ENCODE measurements at regions of chr7 and their contacts with region 1.

Region 1: DNA sequence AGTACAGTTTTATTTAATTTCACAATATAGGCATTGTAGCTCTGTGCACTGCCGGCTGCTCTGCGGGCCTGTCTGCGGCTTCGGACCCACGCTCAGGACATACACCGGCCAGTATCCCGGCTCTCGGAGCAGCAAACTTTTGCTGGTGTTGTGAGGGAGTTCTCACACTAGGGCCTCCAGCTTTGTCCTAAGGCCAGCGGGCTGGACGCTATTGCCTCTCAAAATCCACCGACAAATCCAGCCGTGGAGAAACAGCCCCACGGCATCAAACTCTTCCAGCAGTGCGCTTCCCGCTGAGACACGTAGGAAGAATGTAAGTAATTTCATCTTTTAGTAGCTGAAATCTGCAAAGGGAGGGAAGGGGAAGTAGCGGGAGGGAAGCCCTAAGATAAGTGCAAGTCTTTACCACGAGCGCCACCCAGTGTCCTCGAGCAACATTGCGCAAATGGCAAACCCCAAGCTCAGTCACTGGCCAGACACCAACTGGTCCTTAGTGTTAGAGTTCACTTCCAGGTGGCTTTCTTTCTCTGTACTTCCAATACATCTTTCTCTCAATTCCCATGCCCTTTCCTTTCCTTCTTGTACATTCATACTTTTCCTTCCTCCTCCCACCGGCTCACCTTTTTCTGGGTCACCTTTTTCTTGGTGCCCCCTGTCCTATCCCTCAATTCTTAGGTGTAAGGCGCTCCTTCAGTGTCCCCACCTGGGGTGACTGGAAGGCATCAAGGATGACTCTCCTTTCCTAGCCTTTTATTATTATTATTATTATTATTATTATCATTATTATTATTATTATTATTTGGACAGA is 3.0 kb upstream of the DLX5 start:
- DNase-seq: peak; percentile 81 to 86 (median 82)
- ATAC-seq: peak; percentile 98
- H3K4me3 ChIP-seq: no peak overlapping the region
- H3K27ac ChIP-seq: no peak overlapping the region
- H3K4me1 ChIP-seq: peaks cover 0 to 9% of the 10 kb centered on the region in 2 experiments; a peak in 1 of 5 replicates
- H3K27me3 ChIP-seq: peaks cover 47 to 55% of the 10 kb centered on the region in 2 experiments
- CTCF ChIP-seq: peak; percentile 85 to 97 (median 96)
- EP300 ChIP-seq: no peak
- POLR2A ChIP-seq: no peak
- RAD21 ChIP-seq: peak; percentile 93 to 94

Region 2: DNA sequence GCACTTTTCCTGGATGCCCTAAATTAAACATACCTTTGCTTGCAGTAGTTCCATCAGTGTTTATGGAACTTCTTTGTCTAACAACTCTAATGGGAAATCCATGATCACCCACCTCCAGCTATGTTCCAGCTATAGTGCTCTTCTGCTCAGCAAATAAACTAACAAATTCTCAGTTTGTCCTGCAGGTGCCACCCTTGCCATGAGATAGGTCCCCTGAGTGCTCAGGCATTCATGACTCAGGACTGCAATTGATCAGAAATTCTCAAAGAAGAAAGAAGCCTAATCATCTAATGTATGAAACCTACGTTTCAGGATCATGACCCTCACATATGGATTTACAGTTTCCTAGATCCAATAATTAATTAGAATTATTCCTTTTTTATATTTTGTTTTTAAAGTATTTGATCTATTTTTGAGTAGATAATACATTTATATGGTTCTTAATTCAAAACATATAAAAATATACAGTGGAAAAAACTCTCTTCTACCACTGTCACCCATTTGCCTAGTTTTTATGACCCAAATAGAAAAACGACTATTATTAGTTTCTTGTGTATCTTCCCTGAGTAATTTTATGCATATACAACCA is 1303.9 kb before region 1 on chr7:
- CTCF ChIA-PET with region 1: no interaction called
- POLR2A ChIA-PET with region 1: no interaction called
- in situ Hi-C with region 1: no loop called
- intact Hi-C with region 1: loop called (anchors 5 kb)
- DNase-seq: peak; percentile 18 to 49 (median 34)
- ATAC-seq: peak; percentile 82
- H3K4me3 ChIP-seq: no peak overlapping the region
- H3K27ac ChIP-seq: no peak overlapping the region
- H3K4me1 ChIP-seq: no peaks in the 10 kb centered on the region
- H3K27me3 ChIP-seq: peaks cover 4 to 6% of the 10 kb centered on the region in 2 experiments; a peak in 3 of 5 replicates
- CTCF ChIP-seq: peak; percentile 46 to 68 (median 49); a peak in 4 of 6 replicates
- EP300 ChIP-seq: no peak
- POLR2A ChIP-seq: no peak
- RAD21 ChIP-seq: peak; percentile 63 to 71

Region 3: DNA sequence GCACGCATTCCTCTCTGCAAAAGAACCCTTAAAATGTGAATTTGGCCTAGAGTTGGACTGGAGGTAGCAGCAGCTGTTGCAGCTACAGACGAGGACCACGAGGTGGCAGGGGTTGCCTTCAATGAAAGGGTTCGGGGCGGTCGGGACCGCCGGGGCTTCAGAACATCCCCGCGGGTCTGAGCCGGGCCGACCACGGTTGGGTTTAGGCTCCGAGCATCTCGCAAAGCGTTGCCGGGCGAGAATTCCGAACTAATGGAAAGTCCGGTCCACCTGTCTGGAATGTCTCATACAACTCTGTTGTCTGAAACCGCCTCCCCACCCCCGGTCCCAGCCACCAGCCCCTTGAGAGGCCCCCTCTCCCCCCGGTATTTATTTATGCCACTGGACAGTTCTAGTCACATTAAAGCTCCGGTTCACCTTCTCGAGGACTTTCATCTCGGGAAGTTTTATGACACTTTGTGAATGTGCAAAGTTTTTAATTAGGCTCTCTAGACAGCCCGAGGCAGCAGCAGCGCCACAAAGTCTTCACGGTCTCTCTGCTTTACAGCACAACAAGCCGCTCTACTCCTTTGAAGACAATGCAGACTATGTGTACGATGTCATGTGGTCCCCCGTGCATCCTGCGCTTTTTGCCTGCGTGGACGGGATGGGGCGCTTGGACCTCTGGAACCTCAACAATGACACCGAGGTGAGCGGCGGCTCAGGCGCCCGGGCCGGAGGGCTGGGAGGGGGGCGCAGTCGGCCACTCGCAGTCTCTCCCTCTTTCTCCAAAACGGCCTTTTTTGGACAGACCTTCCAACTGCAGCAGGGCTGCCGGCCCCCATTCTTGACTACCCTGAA is 951.9 kb before region 1 on chr7:
- CTCF ChIA-PET with region 1: interaction called, 21 read pairs
- POLR2A ChIA-PET with region 1: no interaction called
- in situ Hi-C with region 1: loop called (anchors 5 kb)
- intact Hi-C with region 1: loop called (anchors 1 kb)
- DNase-seq: peak; percentile 66 to 76 (median 71)
- ATAC-seq: peak; percentile 97
- H3K4me3 ChIP-seq: peak overlapping the region; percentile 17
- H3K27ac ChIP-seq: no peak overlapping the region
- H3K4me1 ChIP-seq: peaks cover 0 to 9% of the 10 kb centered on the region in 2 experiments; a peak in 2 of 5 replicates
- H3K27me3 ChIP-seq: peaks cover 11 to 13% of the 10 kb centered on the region in 2 experiments
- CTCF ChIP-seq: peak; percentile 76 to 90 (median 83)
- EP300 ChIP-seq: no peak
- POLR2A ChIP-seq: no peak
- RAD21 ChIP-seq: peak; percentile 82 to 86

Region 4: GRCh38 chr7:96084881-96085551 is 942.6 kb before region 1 on chr7:
- CTCF ChIA-PET with region 1: no interaction called
- POLR2A ChIA-PET with region 1: no interaction called
- in situ Hi-C with region 1: loop called (anchors 5 kb)
- intact Hi-C with region 1: no loop called
- DNase-seq: no peak
- ATAC-seq: no peak
- H3K4me3 ChIP-seq: no peak overlapping the region
- H3K27ac ChIP-seq: no peak overlapping the region
- H3K4me1 ChIP-seq: no peaks in the 10 kb centered on the region
- H3K27me3 ChIP-seq: peaks cover 3 to 4% of the 10 kb centered on the region in 2 experiments; a peak in 2 of 5 replicates
- CTCF ChIP-seq: no peak
- EP300 ChIP-seq: no peak
- POLR2A ChIP-seq: no peak
- RAD21 ChIP-seq: no peak

Region 5: DNA sequence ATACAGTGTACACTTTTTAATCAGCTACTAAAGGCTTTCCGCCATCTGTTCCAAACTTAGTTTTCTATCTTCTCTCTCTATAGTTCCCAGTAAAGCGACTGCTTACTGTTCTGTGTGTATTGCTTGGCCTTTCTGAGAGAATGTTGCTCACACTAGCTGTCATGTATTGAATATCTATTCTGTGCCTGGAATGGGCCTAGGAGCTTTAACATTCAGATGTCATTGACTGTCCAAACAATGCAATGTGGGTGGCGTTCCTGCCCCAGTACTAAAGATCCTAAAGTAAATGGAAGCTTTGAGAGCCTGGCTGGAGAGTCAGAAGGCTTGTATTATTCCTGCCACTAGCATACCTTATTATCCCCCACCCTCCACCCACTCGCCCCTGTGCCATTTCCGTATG is 253.3 kb after region 1 on chr7:
- CTCF ChIA-PET with region 1: no interaction called
- POLR2A ChIA-PET with region 1: no interaction called
- in situ Hi-C with region 1: no loop called
- intact Hi-C with region 1: no loop called
- DNase-seq: no peak
- ATAC-seq: no peak
- H3K4me3 ChIP-seq: no peak overlapping the region
- H3K27ac ChIP-seq: no peak overlapping the region
- H3K4me1 ChIP-seq: no peaks in the 10 kb centered on the region
- H3K27me3 ChIP-seq: peaks cover 0 to 7% of the 10 kb centered on the region in 2 experiments; a peak in 1 of 5 replicates
- CTCF ChIP-seq: no peak
- EP300 ChIP-seq: no peak
- POLR2A ChIP-seq: no peak
- RAD21 ChIP-seq: no peak

Region 6: GRCh38 chr7:97446361-97446760 is 418.7 kb after region 1 on chr7:
- CTCF ChIA-PET with region 1: no interaction called
- POLR2A ChIA-PET with region 1: no interaction called
- in situ Hi-C with region 1: no loop called
- intact Hi-C with region 1: no loop called
- DNase-seq: no peak
- ATAC-seq: no peak
- H3K4me3 ChIP-seq: no peak overlapping the region
- H3K27ac ChIP-seq: no peak overlapping the region
- H3K4me1 ChIP-seq: peaks cover 4 to 5% of the 10 kb centered on the region in 2 experiments; a peak in 4 of 5 replicates
- H3K27me3 ChIP-seq: no peaks in the 10 kb centered on the region
- CTCF ChIP-seq: no peak
- EP300 ChIP-seq: no peak
- POLR2A ChIP-seq: no peak
- RAD21 ChIP-seq: no peak

Measured in K562 (cell line).